Activated CD4-positive, alpha-beta T cell treated with anti-CD3 and anti-CD28 coated beads for 36 hours (primary cell): ENCODE measurements at regions of chrX and their contacts with region 1.

Region 1: DNA sequence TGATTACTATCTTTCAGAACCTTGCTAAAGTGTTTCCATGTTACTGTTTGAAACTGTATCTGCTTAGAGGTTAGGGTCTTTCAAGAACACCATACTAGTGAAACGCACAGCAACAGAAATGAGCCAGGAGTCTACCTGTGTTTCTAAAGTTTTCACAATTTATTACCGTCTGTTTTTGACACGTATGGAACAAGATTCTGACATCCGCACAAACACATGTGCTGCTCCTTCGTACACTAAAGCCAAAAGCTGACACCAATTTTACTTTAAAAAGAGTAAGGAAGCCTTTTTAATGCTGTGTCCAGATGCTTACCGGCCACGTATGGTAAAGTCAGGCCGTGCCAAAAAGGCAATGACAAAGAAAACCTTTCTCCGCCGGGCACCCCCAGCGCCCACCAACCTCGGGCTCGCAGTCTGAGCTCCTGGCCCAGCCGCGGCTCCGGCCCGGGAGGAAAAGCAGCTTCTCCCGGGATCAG is 532 bp downstream of the RPS4X start:
- DNase-seq: no peak
- ATAC-seq: no peak
- H3K4me3 Mint-ChIP-seq: peak overlapping the region; percentile 79
- H3K27ac Mint-ChIP-seq: peak overlapping the region; percentile 90
- H3K4me1 Mint-ChIP-seq: peaks cover 38% of the 10 kb centered on the region
- H3K27me3 Mint-ChIP-seq: peaks cover 10% of the 10 kb centered on the region

Region 2: DNA sequence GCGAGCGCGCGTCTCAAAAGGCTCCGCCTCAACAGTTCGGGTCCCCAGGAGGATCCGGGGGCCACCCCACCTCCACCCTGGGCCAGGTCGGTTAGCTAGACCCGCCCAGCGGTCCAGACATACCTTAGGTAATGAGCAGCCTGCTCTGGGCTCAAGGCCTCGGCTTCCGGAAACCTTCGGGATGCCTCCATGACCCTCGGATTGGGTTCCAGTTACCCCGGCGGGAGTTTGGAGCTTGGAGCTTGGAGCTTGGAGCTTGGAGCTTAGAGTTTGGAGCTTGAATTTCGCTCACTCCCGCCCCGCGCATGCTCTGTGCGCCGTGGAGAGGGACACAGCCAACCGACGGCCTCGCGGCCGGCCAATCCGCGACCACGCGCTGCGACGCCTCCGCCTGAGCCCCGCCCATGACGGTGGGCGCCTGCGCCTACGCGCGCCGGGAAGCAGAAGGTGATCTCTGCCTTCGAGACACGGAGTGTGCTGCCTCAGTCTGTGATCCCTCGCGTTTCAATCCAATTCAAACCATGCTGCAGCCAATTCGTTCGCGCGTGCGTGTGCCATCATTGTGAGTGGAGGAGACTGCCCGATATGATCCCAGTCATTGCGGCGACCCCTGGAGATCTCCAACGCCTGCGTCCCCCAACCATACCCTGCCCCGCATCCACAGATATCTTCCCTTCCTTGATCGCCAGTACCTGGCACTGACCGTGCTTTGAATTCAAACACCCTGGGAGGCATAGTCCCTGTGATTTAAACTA is 37.6 kb before region 1 on chrX and contains the start of gene ERCC6L:
- CTCF ChIA-PET with region 1: interaction called, 11 read pairs
- POLR2A ChIA-PET with region 1: interaction called, 10 read pairs
- intact Hi-C with region 1: loop called (anchors 2 to 5 kb)
- DNase-seq: peak; percentile 91
- ATAC-seq: peak; percentile 97
- H3K4me3 Mint-ChIP-seq: peak within 1 kb of the TSS; percentile 80
- H3K27ac Mint-ChIP-seq: peak within 1 kb of the TSS; percentile 83
- H3K4me1 Mint-ChIP-seq: peaks cover 15% of the 10 kb centered on the region
- H3K27me3 Mint-ChIP-seq: no peaks in the 10 kb centered on the region
- total RNA-seq, gene ERCC6L: 11.3 to 11.7 TPM

Region 3: GRCh38 chrX:72306851-72307645 is 30.5 kb after region 1 on chrX:
- CTCF ChIA-PET with region 1: interaction called, 3 read pairs
- POLR2A ChIA-PET with region 1: no interaction called
- intact Hi-C with region 1: loop called in 1 of 2 experiments (anchors 2 kb)
- DNase-seq: peak; percentile 50
- ATAC-seq: peak; percentile 40
- H3K4me3 Mint-ChIP-seq: peak overlapping the region; percentile 69
- H3K27ac Mint-ChIP-seq: no peak overlapping the region
- H3K4me1 Mint-ChIP-seq: peaks cover 24% of the 10 kb centered on the region
- H3K27me3 Mint-ChIP-seq: peaks cover 47% of the 10 kb centered on the region

Region 4: GRCh38 chrX:72714476-72714916 is 438.0 kb after region 1 on chrX:
- CTCF ChIA-PET with region 1: no interaction called
- POLR2A ChIA-PET with region 1: no interaction called
- intact Hi-C with region 1: loop called in 1 of 2 experiments (anchors 5 kb)
- DNase-seq: peak; percentile 18
- ATAC-seq: no peak
- H3K4me3 Mint-ChIP-seq: peak overlapping the region; percentile 74
- H3K27ac Mint-ChIP-seq: peak overlapping the region; percentile 82
- H3K4me1 Mint-ChIP-seq: peaks cover 10% of the 10 kb centered on the region
- H3K27me3 Mint-ChIP-seq: peaks cover 3% of the 10 kb centered on the region